Right ventricle myocardium inferior (tissue), 1 donor: ENCODE measurements at regions of chr12 and their contacts with region 1.

Region 1: DNA sequence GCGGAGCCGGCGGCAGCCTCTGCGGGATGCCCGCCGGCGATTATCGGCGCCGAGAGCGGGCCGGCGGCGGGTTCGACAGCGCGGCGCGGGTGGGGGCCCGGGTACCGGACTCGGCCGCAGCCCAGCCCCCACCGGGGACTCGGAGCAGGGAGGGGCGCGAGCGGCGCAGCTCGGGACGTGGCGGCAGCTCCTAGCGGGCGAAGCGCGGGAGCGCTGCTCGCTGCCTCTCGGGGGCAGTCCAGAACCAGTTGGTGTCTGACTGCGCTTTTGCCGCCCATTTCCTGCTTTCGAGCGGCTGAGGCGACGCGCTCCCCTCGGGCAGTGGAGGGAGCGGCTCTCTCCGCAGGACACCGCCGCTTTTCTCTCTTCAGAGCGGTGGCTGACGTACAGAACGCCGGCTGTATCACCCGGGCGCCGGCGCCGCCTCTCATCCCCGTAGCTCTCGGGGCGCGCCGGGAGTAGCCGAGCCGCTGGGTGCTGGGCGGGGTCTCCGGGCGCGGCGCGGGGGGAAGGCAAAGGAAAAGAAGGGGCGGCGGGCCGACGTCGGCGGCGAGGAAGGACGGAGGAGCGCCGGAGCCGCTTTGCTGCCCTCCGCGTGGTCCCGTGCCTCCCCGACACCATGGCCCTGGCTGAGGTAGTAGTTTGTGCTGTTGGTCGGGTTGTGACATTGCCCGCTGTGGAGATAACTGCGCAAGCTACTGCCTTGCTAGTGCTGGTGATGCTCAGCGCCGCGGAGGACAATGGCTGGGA is 136.6 kb downstream of the MON2 start:
- DNase-seq: peak; percentile 93
- ATAC-seq: peak; percentile 94

Region 2: DNA sequence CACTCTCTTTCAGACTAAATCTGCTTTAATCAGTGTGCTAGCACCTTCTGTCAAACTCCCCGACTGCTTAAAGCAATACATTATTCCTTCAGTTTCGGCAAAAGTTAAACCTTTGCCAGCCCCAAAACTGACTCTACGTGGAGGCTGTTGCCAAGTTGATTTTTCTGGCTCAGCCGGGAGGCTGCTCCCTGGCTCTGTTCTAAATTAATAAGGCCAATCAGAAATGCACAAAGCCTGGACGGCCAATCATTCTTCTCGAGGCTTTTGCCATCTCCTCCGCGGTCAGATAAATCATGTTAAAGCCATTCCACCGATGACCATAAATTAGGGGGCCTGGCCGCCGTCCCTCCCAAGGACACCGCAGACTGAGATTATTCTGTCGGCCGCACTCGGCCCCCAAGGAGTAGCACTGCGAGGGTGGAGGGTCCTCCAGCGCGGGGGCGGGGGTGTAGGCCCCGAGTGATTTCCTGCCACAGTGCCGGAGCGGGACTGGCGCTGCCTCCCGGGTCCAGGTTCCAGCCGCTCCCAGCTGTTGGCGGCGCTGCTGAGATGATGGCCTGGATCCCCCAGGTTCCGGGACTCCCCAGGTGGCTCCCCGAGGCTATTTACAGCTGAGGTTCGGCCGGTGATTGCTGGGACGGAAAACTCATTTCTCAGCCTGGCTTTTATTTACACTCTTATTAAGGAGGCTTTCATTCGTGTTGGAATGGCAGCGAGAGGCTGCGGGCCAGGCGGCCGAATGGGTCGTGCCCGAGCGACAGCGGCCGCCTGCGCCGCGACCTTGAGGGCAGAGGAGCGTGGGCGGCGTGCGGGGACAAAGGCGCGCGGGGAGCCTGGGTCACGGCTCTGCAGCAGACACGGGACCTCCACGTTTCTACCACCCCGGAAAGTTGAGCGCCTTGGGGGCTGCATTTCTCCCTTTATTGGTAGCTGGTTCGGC is 28.5 kb after region 1 on chr12:
- intact Hi-C with region 1: loop called (anchors 2 kb)
- DNase-seq: peak; percentile 82
- ATAC-seq: peak; percentile 82

Region 3: GRCh38 chr12:62703011-62703380 is 99.8 kb after region 1 on chr12:
- intact Hi-C with region 1: loop called (anchors 5 kb)
- DNase-seq: no peak
- ATAC-seq: peak; percentile 6

Region 4: DNA sequence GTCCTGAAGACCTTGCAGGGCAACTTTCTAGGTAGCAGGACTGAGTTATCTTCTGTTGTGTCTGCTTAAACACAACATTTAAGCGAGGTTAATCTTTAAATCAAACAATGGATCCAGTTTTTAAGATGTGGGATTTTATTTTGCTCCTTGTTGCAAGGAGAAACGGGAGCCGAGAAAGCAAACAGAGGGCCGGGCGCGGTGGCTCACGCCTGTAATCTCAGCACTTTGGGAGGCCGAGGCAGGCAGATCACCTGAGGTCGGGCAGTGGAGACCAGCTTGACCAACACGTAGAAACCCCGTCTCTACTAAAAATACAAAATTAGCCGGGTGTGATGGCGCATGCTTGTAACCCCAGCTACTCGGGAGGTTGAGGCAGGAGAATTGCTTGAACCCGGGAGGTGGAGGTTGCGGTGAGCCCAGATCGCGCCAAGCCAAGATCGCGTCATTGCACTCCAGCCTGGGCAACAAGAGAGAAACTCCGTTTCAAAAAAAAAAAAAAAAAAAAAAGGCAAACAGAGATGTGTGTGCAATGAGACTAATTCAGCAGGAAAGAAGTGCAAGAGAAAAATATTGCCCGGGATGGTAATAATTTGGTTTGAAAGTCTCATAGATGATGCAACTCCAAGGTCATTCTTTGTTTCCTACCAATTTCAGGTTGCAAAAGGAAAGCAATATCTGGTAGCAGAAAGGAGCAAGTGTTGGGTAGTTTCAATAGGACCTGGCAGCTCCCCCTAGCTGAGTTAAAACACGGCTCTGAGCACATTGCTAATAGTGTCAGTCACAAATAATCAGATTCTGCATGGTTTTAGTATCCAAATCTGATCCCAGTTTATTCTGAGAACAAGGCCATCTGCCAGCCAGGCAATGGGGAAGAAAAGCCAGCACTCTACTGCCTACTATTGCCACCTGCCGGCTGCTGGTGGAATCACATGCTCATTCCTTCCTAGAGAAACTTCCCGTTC is 190.3 kb after region 1 on chr12:
- intact Hi-C with region 1: loop called (anchors 1 kb)
- DNase-seq: peak; percentile 93
- ATAC-seq: peak; percentile 79

Region 5: GRCh38 chr12:62934799-62935674 is 331.8 kb after region 1 on chr12 and contains the start of gene PPM1H:
- intact Hi-C with region 1: loop called (anchors 10 kb)
- DNase-seq: peak; percentile 86
- ATAC-seq: peak; percentile 89
- total RNA-seq, gene PPM1H: 8.3 TPM